ENCODE measurements at regions of chr15 and their contacts with region 1.

Region 1: DNA sequence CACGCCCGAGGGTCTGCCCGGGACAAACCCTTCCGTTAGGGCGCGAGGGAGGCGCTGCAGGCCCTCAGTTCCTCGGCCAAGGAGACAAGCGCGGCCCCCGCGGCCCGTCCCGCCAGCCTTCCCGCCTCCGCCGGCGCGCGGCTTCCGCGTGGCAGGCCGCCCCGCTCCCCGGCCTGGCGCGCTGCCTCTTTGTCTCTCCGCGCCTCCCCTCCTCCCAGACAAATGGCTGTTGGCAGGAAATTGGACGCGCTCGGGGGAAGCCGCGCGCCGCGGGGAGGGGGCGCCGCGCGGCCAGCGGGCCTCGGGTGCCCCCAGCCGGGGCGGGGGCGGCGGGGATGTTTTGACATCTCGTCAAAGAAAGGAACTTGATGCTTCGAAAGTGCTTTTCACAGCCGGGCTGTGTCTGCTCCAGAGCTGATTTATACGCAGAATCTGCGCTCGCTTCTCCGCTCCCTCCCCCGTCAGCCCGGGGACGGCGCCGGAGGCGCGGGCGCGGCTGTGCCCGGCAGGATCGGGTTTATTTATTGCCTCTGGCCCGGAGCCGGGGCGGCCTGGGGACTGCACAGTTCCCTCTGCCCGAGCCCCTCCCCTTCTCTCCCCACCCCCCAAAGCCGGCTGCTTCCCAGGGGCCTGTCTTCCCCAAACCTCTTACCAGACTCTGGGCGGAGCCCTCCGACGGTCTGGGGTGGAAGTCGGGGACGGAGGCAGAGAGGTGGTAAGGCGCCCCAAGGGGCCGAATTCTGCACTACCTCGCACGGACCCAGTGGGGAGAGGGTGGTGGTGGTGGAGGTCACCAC is 20.7 kb downstream of the SHF start:
- DNase-seq: peak; percentile 89
- ATAC-seq: peak; percentile 91
- H3K4me3 Mint-ChIP-seq: peak overlapping the region; percentile 63
- H3K27ac Mint-ChIP-seq: peak overlapping the region; percentile 75
- H3K4me1 Mint-ChIP-seq: peaks cover 14% of the 10 kb centered on the region
- H3K27me3 Mint-ChIP-seq: no peaks in the 10 kb centered on the region
- CTCF ChIP-seq: peak; percentile 70

Region 2: DNA sequence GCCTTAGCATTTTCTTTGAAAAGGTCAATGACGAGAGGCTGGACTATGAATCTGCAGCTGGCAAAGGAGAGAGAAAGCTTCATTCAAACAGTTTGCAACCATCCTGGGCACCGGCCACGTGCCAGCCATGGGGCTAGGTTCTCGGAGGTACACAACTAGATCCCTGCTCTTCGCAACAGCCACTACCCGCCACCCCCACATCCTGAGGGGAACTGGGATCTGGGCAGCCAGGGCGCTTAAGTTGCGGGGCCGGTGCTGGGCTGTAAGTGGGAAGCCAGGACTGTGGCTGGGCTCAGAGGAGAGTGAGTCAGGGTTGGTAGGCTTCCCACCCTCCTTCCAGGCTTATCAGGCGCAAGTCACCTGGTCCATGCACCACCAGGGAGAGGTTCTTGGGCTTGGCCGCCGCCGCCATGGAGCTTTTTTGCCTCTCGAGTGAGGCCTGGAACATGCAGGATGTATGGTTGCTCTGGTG is 305.6 kb before region 1 on chr15:
- CTCF ChIA-PET with region 1: no interaction called
- POLR2A ChIA-PET with region 1: no interaction called
- intact Hi-C with region 1: no loop called
- DNase-seq: no peak
- ATAC-seq: no peak
- H3K4me3 Mint-ChIP-seq: no peak overlapping the region
- H3K27ac Mint-ChIP-seq: no peak overlapping the region
- H3K4me1 Mint-ChIP-seq: no peaks in the 10 kb centered on the region
- H3K27me3 Mint-ChIP-seq: no peaks in the 10 kb centered on the region
- CTCF ChIP-seq: no peak

Region 3: DNA sequence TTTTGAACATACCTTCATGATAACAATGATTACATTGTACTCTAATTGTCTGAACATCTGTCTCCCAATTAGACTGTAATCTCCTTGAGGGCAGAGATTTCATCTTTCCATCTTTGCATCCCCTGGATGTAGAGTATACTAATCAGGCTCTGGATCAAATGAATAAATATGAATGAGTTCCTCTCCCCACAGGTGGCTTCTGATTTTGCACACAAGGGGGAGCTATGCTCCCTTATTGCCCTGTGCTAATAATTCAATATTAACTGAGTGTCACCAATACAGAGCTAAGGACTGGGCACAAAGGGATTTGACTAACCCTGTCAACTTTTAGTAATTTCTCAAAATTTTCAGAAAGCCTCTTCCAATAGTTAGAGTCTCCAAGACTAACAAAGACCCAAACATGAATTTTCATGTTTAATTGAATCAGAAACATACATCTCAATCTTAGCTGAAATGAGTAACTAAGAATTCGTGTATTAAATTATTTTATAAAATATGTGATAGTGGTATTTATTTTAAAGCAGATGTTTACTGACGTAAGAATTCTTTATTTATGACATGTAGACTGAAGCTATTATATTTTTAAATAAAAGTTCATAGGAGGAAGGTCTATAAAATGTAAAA is 40.4 kb before region 1 on chr15:
- CTCF ChIA-PET with region 1: interaction called, 10 read pairs
- POLR2A ChIA-PET with region 1: no interaction called
- intact Hi-C with region 1: no loop called
- DNase-seq: peak; percentile 53
- ATAC-seq: peak; percentile 55
- H3K4me3 Mint-ChIP-seq: no peak overlapping the region
- H3K27ac Mint-ChIP-seq: no peak overlapping the region
- H3K4me1 Mint-ChIP-seq: no peaks in the 10 kb centered on the region
- H3K27me3 Mint-ChIP-seq: peaks cover 50% of the 10 kb centered on the region
- CTCF ChIP-seq: peak; percentile 68

Region 4: DNA sequence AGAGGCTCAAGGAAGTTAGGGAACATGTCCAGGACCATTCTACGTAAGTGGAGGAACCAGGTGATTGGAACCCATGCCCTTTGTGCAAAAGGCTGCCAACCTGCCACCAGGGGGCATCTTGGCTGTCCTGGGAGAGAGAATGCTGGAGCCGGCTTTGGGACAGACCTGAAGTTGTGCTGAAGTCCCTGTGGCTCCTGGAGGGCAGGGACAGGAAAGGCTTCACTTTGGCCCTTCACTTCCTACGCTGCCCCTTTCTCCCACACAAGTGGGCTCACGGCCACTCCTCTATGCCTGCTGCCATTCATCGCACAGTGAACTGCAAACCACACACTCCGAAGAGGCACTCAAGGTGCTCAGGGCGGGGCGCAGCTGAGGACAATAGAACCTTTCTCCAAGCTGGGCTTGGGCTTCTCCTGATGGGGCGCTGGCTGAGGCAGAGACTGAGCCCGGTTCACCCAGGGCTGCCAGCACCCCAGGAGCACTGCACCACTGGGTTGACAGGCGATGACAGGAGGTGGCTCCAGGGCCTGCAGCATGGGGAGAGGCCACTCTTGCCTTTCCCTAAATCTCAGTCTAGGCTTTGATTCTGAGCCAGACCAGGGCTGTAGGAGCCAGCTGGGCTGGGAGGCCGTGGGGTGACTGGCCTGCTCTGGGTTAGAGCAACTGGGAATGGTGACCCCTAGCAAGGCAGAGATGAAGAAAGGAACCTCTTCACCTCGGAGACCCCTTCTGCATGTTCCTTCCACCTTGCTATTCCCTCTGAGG is 12.4 kb after region 1 on chr15:
- CTCF ChIA-PET with region 1: interaction called, 131 read pairs
- POLR2A ChIA-PET with region 1: interaction called, 33 read pairs
- intact Hi-C with region 1: no loop called
- DNase-seq: peak; percentile 59
- ATAC-seq: peak; percentile 59
- H3K4me3 Mint-ChIP-seq: no peak overlapping the region
- H3K27ac Mint-ChIP-seq: no peak overlapping the region
- H3K4me1 Mint-ChIP-seq: peaks cover 19% of the 10 kb centered on the region
- H3K27me3 Mint-ChIP-seq: no peaks in the 10 kb centered on the region
- CTCF ChIP-seq: peak; percentile 65

Region 5: GRCh38 chr15:45187894-45188830 is 21.1 kb after region 1 on chr15 and contains the start of gene SHF:
- CTCF ChIA-PET with region 1: interaction called, 131 read pairs
- POLR2A ChIA-PET with region 1: interaction called, 50 read pairs
- intact Hi-C with region 1: no loop called
- DNase-seq: peak; percentile 92
- ATAC-seq: peak; percentile 81
- H3K4me3 Mint-ChIP-seq: peak within 1 kb of the TSS; percentile 77
- H3K27ac Mint-ChIP-seq: peak within 1 kb of the TSS; percentile 92
- H3K4me1 Mint-ChIP-seq: peaks cover 28% of the 10 kb centered on the region
- H3K27me3 Mint-ChIP-seq: no peaks in the 10 kb centered on the region
- CTCF ChIP-seq: no peak
- total RNA-seq, gene SHF: 19.8 to 23.5 TPM

Region 6: DNA sequence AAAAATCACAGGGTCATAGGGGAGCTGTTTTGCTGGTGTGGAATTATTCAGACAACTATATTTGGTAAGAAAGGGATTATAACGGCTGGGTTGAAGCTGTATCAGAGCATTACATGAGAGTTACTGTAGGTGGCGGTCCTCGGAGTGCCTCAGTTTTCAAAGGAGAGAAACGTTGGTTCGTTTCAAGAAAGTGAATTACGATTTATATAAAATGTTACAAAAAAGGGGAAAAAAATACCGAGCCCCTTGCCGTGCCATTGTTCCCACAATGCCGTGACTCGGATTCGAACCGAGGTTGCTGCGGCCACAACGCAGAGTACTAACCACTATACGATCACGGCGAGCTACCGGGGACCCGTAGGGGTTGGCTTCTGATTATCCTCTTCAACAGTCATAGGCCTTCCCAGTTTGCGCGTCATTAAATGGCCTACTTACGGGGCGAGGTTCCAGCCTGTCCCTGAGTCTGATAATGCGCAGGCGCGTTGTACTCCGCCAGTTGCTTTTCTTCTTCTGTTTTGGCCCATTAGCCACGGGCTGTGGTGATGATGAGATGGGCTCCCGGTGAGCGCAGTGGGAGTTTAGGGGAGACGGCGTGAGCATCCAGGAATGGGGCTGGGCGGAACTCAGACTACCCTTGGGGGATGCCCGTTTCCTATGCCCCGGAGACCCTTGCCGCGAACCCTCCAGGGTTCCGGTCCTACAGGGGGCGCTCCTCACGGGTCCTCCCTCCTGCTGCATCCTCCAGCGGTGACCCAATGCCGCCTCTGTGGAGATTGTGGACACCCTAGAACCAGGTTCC is 31.5 kb after region 1 on chr15:
- CTCF ChIA-PET with region 1: interaction called, 29 read pairs
- POLR2A ChIA-PET with region 1: interaction called, 51 read pairs
- intact Hi-C with region 1: no loop called
- DNase-seq: peak; percentile 95
- ATAC-seq: peak; percentile 66
- H3K4me3 Mint-ChIP-seq: no peak overlapping the region
- H3K27ac Mint-ChIP-seq: no peak overlapping the region
- H3K4me1 Mint-ChIP-seq: peaks cover 8% of the 10 kb centered on the region
- H3K27me3 Mint-ChIP-seq: peaks cover 3% of the 10 kb centered on the region
- CTCF ChIP-seq: peak; percentile 68